ENCODE measurements at regions of chr1 and their contacts with region 1.

Region 1: DNA sequence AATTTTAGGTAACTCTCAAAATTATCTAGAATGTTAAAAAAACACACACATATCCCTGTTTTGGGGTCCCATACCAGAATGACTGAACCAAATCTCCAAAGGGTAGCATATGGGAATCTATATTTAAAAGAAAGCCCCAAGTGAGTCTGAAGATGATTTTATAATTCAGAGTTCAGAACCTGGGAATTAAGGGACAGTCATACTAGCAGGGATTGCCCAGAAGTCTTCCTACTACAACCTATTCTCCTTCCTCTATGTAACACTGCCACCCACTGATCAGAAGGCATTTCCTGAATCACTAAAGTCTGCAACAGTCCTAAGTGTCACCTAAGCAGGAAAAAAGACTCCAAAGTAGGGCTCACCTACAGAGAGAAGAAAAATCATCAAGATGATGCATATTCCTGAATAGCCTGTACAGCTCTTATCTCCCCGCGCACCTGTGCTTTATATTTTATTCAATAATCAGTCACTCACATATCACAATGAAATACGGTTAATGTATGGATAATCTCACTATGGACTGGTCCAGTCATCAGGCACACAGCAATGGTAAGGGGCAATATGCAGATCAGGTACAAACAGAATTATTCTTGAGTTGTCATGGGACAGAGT is 4.9 kb downstream of the RGS1 start:
- DNase-seq: peak; percentile 48
- H3K4me3 ChIP-seq: no peak overlapping the region
- H3K27ac ChIP-seq: no peak overlapping the region
- H3K4me1 ChIP-seq: peaks cover 4% of the 10 kb centered on the region
- CTCF ChIP-seq: peak; percentile 80

Region 2: GRCh38 chr1:192477630-192478029 is 102.8 kb before region 1 on chr1:
- CTCF ChIA-PET with region 1: no interaction called
- POLR2A ChIA-PET with region 1: no interaction called
- intact Hi-C with region 1: loop called (anchors 1 kb)
- DNase-seq: peak; percentile 58
- H3K4me3 ChIP-seq: no peak overlapping the region
- H3K27ac ChIP-seq: no peak overlapping the region
- H3K4me1 ChIP-seq: no peaks in the 10 kb centered on the region
- CTCF ChIP-seq: peak; percentile 90

Region 3: DNA sequence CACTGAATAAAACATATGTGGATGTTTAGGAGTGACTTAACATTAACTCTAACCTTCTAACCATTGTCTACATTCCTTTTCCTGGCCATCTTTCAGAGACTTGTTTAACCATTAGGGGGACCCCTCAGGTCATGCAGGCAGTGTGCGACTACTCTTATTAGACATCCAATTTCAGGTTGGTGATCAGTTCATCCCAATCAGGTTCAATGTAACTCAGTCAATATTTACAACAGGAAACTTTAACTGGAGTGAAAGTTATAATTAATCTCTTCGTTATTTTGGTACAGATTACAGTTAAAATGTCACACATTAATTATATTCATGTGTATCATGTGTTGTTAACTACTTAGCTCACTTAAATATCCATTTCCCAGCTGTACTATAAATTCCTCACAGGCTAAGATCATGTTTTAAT is 73.7 kb before region 1 on chr1:
- CTCF ChIA-PET with region 1: interaction called, 3 read pairs
- POLR2A ChIA-PET with region 1: interaction called, 3 read pairs
- intact Hi-C with region 1: loop called (anchors 1 kb)
- DNase-seq: peak; percentile 60
- H3K4me3 ChIP-seq: no peak overlapping the region
- H3K27ac ChIP-seq: no peak overlapping the region
- H3K4me1 ChIP-seq: no peaks in the 10 kb centered on the region
- CTCF ChIP-seq: peak; percentile 80

Region 4: GRCh38 chr1:192516776-192517297 is 63.6 kb before region 1 on chr1:
- CTCF ChIA-PET with region 1: no interaction called
- POLR2A ChIA-PET with region 1: interaction called, 4 read pairs
- intact Hi-C with region 1: loop called (anchors 2 kb)
- DNase-seq: peak; percentile 89
- H3K4me3 ChIP-seq: peak overlapping the region; percentile 58
- H3K27ac ChIP-seq: peak overlapping the region; percentile 46
- H3K4me1 ChIP-seq: peaks cover 39% of the 10 kb centered on the region
- CTCF ChIP-seq: no peak

Region 5: GRCh38 chr1:192615055-192615454 is 34.6 kb after region 1 on chr1:
- CTCF ChIA-PET with region 1: no interaction called
- POLR2A ChIA-PET with region 1: interaction called, 10 read pairs
- intact Hi-C with region 1: no loop called
- DNase-seq: peak; percentile 47
- H3K4me3 ChIP-seq: no peak overlapping the region
- H3K27ac ChIP-seq: no peak overlapping the region
- H3K4me1 ChIP-seq: peaks cover 47% of the 10 kb centered on the region
- CTCF ChIP-seq: no peak

Region 6: DNA sequence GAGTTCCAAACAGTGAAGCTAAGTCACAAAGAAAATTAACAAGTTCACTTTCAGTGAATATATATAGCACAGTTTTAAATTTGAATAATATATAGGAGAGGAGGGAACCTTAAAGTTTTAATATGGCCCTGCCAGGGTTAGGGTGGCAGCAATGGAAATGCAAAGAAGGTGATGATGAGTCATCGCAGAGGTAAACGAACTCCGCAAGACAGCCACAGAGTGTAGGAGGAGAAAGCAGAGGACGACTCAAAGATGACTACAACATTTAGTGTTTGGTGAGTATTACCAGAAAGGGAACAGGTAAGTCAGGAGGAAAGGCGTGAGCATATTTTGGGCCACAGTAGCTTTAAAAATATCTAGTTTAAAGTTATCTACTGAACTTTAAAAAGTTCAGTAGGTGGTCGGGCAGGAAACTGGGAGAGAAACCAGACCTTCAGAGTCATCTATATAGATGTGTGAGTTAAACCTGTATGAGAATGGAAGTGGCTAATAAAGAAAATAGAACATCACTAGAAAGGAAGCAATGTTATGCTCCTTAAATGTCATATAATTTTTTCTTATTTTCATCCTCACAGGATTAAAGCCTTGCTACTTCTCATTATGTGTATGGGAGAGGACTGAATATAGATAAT is 403.0 kb after region 1 on chr1:
- CTCF ChIA-PET with region 1: no interaction called
- POLR2A ChIA-PET with region 1: no interaction called
- intact Hi-C with region 1: no loop called
- DNase-seq: no peak
- H3K4me3 ChIP-seq: no peak overlapping the region
- H3K27ac ChIP-seq: no peak overlapping the region
- H3K4me1 ChIP-seq: no peaks in the 10 kb centered on the region
- CTCF ChIP-seq: no peak

Measured in OCI-LY7 (cell line).